ENCODE measurements at regions of chr19 and their contacts with region 1.

Region 1: DNA sequence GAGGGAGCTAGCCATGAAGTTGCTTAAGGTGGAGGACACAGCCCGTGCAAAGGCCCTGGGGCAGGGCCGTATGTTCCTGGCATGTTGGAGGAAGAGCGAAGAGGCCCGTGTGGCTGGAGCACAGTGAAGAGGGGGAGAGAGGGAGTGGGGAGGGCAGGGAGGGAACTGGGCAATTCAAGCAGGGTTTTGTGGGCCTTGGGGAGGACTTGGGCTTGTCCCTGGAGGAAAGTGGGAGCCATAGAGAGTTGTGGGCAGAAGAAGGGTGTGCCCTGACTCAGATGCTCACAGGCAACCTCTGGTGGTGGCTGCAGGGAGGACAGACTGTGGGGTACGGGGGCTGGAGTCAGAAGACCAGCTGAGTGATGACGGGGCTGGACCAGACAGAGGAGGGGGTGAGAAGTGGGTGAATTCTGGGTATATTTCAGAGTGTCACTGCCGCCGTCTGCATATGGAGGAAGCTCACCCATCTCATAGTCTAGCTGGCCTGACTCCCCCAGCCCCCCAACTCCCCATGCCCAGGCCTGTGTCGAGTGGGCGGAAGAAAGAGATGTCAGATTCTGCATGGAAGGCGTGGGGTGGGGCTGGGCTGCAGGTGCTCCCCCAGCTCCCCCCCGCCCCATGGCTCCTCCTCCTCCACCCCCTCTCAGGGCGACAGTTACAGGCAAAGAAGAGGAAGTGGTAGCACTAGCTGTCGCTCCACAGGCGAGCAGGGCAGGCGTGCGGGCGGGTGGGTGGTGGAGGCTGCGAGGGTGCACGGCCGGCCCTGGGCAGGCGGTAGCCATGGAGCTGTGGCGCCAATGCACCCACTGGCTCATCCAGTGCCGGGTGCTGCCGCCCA is at the start of gene VAV1:
- DNase-seq: peak; percentile 74
- H3K4me3 ChIP-seq: peak within 1 kb of the TSS; percentile 47
- H3K27ac ChIP-seq: peak within 1 kb of the TSS; percentile 40
- H3K4me1 ChIP-seq: no peaks in the 10 kb centered on the region
- H3K27me3 ChIP-seq: no peaks in the 10 kb centered on the region
- CTCF ChIP-seq: no peak
- total RNA-seq, gene VAV1: 5.7 to 6.0 TPM

Region 2: DNA sequence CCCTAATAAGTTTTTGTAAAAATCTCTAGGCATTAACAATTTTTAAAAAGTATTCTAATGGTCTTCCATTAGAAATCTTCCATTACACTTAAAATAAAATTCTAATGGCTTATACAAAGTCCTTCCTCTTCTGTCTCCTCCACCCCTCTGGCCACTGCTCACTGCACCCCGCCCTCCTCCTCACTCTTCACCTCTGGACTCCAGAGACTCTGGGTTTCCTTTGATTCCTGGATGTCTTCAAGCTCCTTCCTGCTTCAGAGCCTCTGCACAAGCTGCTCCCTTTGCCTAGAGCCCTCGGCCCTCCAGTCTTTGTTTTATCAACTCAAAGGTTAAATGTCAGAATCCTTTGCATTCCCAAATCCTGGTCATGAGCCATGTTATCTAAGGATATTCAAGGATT is 123.1 kb before region 1 on chr19:
- intact Hi-C with region 1: loop called (anchors 10 kb)
- DNase-seq: no peak
- H3K4me3 ChIP-seq: no peak overlapping the region
- H3K27ac ChIP-seq: no peak overlapping the region
- H3K4me1 ChIP-seq: no peaks in the 10 kb centered on the region
- H3K27me3 ChIP-seq: no peaks in the 10 kb centered on the region
- CTCF ChIP-seq: no peak